HEK293 (cell line): ENCODE measurements at regions of chr17 and their contacts with region 1.

Region 1: DNA sequence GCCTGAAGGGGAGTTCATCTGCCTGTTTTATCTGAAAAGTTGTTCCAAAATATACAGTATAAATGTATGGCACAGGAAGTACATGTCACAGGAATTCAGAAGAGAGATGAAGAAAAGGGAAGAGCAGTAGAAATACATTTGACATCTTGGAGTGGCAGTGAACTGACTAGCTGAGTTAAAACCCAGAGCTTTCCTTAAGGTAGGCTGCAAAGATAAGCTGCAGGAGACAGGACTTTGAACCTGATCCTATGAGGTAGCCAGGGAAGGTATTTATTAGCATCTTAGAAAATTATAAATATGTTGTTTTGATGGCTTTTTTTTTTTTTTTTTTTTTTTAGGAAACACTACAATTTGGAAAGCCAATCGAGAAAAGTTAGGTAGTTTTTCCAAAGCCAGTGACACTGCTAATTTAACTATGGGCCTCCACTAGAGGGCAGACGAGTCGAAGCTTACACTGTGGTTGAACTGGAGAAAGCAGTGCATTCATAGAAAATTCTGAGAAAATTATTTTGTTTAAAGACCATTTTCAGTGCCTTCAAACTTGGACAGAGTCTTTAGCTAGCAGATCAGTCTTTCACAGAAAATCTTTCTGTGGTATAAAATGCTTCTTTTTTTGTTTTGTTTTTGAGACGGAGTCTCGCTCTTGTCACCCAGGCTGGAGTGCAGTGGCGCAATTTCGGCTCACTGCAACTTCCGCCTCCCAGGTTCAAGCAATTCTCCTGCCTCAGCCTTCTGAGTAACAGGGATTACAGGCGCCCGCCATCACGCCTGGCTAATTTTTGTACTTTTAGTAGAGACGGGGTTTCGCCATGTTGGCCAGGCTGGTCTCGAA is 122.3 kb downstream of the SSH2 start:
- H3K4me3 ChIP-seq: no peak overlapping the region
- H3K27ac ChIP-seq: no peak overlapping the region
- H3K4me1 ChIP-seq: no peaks in the 10 kb centered on the region
- CTCF ChIP-seq: peak; percentile 23; the same call in 1 of the 2 replicates

Region 2: GRCh38 chr17:29821897-29822296 is 14.2 kb after region 1 on chr17:
- CTCF ChIA-PET with region 1: interaction called, 33 read pairs
- POLR2A ChIA-PET with region 1: no interaction called
- H3K4me3 ChIP-seq: no peak overlapping the region
- H3K27ac ChIP-seq: no peak overlapping the region
- H3K4me1 ChIP-seq: peaks cover 13% of the 10 kb centered on the region
- CTCF ChIP-seq: no peak

Region 3: GRCh38 chr17:29918922-29919856 is 111.5 kb after region 1 on chr17:
- CTCF ChIA-PET with region 1: interaction called, 361 read pairs
- POLR2A ChIA-PET with region 1: no interaction called
- H3K4me3 ChIP-seq: no peak overlapping the region
- H3K27ac ChIP-seq: no peak overlapping the region
- H3K4me1 ChIP-seq: peaks cover 11% of the 10 kb centered on the region
- CTCF ChIP-seq: no peak

Region 4: DNA sequence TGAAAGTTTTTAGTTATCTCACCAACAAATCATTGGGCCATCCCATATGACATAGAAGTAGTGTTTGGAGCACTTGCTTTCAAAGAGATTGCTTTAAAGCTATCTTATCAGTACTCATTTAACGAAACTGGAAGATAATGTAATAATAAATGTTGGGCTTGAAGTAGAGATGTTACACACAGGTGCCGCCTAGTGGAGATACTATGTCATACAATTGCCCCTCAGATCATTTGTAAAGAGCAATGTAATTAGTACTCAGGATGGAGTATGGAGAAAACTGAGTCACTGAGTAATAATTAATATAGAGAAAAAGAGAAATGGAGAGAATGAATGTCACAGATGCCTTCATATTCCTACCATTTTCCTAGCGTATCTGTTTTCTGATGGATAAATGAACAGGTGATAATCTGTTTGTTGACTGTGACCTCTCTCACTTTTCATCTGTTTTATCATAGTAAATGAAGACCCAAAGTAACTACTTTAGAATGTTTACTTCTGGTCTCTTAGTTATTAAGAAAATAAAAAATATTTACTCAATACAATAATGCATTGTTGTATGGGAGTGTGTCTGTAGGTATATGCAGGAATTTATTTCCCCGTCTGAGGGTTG is 214.1 kb after region 1 on chr17:
- CTCF ChIA-PET with region 1: interaction called, 30 read pairs
- POLR2A ChIA-PET with region 1: no interaction called
- H3K4me3 ChIP-seq: no peak overlapping the region
- H3K27ac ChIP-seq: no peak overlapping the region
- H3K4me1 ChIP-seq: no peaks in the 10 kb centered on the region
- CTCF ChIP-seq: 0 out of 2 replicates have a peak, but pooled peaks have one; percentile 34